GM12878 (cell line): ENCODE measurements at regions of chr11 and their contacts with region 1.

Region 1: GRCh38 chr11:130243816-130244215 is 70.9 kb downstream of the ZBTB44 start:
- DNase-seq: peak; percentile 46
- ATAC-seq: peak; percentile 91
- H3K4me3 ChIP-seq: peak overlapping the region; percentile 56; the same call in 1 of the 2 replicates
- H3K27ac ChIP-seq: peak overlapping the region; percentile 74
- H3K4me1 ChIP-seq: peaks cover 6% of the 10 kb centered on the region; the same call in 1 of the 2 replicates
- H3K27me3 ChIP-seq: no peaks in the 10 kb centered on the region
- CTCF ChIP-seq: no peak
- EP300 ChIP-seq: no peak
- POLR2A ChIP-seq: no peak
- RAD21 ChIP-seq: no peak

Region 2: DNA sequence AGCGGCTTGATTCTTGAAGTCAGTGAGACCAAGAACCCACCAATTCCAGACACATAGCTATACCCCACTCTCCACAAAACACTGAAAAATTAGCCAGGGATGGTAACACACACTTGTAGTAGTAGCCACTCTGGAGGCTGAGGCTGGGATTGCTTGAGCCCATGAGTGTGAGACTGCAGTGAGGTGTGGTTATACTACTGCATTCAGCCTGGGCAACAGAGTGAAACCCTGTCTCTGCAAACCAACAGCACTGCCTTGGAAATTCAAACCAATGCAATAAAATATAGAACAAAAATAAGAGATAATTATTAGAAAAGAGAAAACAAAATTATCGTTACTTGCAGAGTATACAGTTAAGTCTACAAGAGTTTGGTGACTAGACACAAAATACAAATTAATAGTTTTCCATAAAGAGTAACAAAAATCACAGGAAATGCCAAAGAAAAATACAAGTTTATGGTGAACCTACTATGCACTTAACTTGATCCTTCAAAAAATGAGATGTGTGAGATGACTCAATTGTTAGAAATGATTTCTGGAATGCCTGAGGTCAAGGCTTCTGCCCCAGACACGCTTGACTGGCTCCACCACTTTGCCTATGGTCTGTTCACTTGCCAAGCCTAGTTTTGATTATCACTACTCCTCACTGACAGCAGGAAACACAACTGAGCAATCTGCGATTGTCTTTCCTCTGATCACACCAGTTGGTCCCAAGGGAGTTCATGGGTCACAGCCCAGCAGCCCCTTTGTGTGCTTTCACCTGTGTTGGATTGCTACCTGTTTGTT is 220.8 kb before region 1 on chr11:
- CTCF ChIA-PET with region 1: no interaction called
- POLR2A ChIA-PET with region 1: no interaction called
- RAD21 ChIA-PET with region 1: no interaction called
- SMC1A ChIA-PET with region 1: no interaction called
- in situ Hi-C with region 1: no loop called
- intact Hi-C with region 1: no loop called
- DNase-seq: peak; percentile 88
- ATAC-seq: peak; percentile 98
- H3K4me3 ChIP-seq: no peak overlapping the region
- H3K27ac ChIP-seq: no peak overlapping the region
- H3K4me1 ChIP-seq: peaks cover 5% of the 10 kb centered on the region
- H3K27me3 ChIP-seq: peaks cover 0 to 1% of the 10 kb centered on the region in 2 experiments; a peak in 2 of 4 replicates
- CTCF ChIP-seq: no peak
- EP300 ChIP-seq: no peak
- POLR2A ChIP-seq: no peak
- RAD21 ChIP-seq: no peak

Region 3: GRCh38 chr11:130145975-130146776 is 97.6 kb before region 1 on chr11:
- CTCF ChIA-PET with region 1: no interaction called
- POLR2A ChIA-PET with region 1: no interaction called
- RAD21 ChIA-PET with region 1: no interaction called
- SMC1A ChIA-PET with region 1: no interaction called
- in situ Hi-C with region 1: no loop called
- intact Hi-C with region 1: no loop called
- DNase-seq: no peak
- ATAC-seq: peak; percentile 67
- H3K4me3 ChIP-seq: no peak overlapping the region
- H3K27ac ChIP-seq: no peak overlapping the region
- H3K4me1 ChIP-seq: peaks cover 42% of the 10 kb centered on the region
- H3K27me3 ChIP-seq: no peaks in the 10 kb centered on the region
- CTCF ChIP-seq: peak in 1 of 3 experiments; percentile 17; a peak in 1 of 6 replicates
- EP300 ChIP-seq: no peak
- POLR2A ChIP-seq: no peak
- RAD21 ChIP-seq: no peak

Region 4: GRCh38 chr11:130269326-130269943 is 25.6 kb after region 1 on chr11:
- CTCF ChIA-PET with region 1: interaction called, 6 read pairs
- POLR2A ChIA-PET with region 1: interaction called, 15 read pairs
- RAD21 ChIA-PET with region 1: interaction called, 4 read pairs
- SMC1A ChIA-PET with region 1: interaction called, 4 read pairs
- in situ Hi-C with region 1: no loop called
- intact Hi-C with region 1: no loop called
- DNase-seq: peak; percentile 45
- ATAC-seq: peak; percentile 99
- H3K4me3 ChIP-seq: no peak overlapping the region
- H3K27ac ChIP-seq: peak overlapping the region; percentile 79
- H3K4me1 ChIP-seq: peaks cover 11% of the 10 kb centered on the region; the same call in 1 of the 2 replicates
- H3K27me3 ChIP-seq: no peaks in the 10 kb centered on the region
- CTCF ChIP-seq: no peak
- EP300 ChIP-seq: peak in 1 of 2 experiments; percentile 74; a peak in 3 of 4 replicates
- POLR2A ChIP-seq: no peak
- RAD21 ChIP-seq: no peak

Region 5: DNA sequence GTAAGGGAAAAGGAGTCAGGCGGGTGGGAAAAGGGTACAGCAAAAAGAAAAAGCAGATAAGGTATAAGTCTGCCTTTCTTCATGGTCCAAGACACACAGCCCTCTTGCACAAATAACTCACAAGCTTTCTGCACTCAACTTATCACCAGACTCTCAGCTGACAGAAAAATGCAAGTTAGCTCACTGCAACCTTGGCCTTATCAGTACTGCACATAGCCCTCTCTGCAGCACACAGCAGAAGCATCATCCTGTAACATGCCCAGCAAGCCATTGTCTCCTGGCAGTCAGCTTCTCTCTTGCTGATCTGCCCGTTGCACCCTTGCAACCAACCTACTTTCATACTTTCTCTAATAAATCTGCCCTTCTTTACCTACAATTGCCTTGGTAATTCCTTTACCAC is 65.1 kb after region 1 on chr11:
- CTCF ChIA-PET with region 1: interaction called, 4 read pairs
- POLR2A ChIA-PET with region 1: interaction called, 4 read pairs
- RAD21 ChIA-PET with region 1: interaction called, 3 read pairs
- SMC1A ChIA-PET with region 1: interaction called, 10 read pairs
- in situ Hi-C with region 1: no loop called
- intact Hi-C with region 1: loop called (anchors 5 kb)
- DNase-seq: no peak
- ATAC-seq: peak; percentile 62
- H3K4me3 ChIP-seq: no peak overlapping the region
- H3K27ac ChIP-seq: no peak overlapping the region
- H3K4me1 ChIP-seq: 0 out of 2 replicates have a peak, but pooled peaks cover 3% of the 10 kb centered on the region
- H3K27me3 ChIP-seq: no peaks in the 10 kb centered on the region
- CTCF ChIP-seq: no peak
- EP300 ChIP-seq: no peak
- POLR2A ChIP-seq: no peak
- RAD21 ChIP-seq: no peak

Region 6: GRCh38 chr11:130314750-130315285 is 71.0 kb after region 1 on chr11 and contains the start of gene ZBTB44:
- CTCF ChIA-PET with region 1: no interaction called
- POLR2A ChIA-PET with region 1: no interaction called
- RAD21 ChIA-PET with region 1: interaction called, 3 read pairs
- SMC1A ChIA-PET with region 1: interaction called, 10 read pairs
- in situ Hi-C with region 1: no loop called
- intact Hi-C with region 1: loop called (anchors 5 kb)
- DNase-seq: peak; percentile 74
- ATAC-seq: peak; percentile 86
- H3K4me3 ChIP-seq: peak within 1 kb of the TSS; percentile 75
- H3K27ac ChIP-seq: peak within 1 kb of the TSS; percentile 78
- H3K4me1 ChIP-seq: peaks cover 7% of the 10 kb centered on the region; the same call in 1 of the 2 replicates
- H3K27me3 ChIP-seq: no peaks in the 10 kb centered on the region
- CTCF ChIP-seq: no peak
- EP300 ChIP-seq: no peak
- POLR2A ChIP-seq: peak; percentile 64
- RAD21 ChIP-seq: no peak
- polyA plus RNA-seq, gene ZBTB44: 3.4 to 5.9 TPM